ENCODE measurements at regions of chr15 and their contacts with region 1.

Region 1: DNA sequence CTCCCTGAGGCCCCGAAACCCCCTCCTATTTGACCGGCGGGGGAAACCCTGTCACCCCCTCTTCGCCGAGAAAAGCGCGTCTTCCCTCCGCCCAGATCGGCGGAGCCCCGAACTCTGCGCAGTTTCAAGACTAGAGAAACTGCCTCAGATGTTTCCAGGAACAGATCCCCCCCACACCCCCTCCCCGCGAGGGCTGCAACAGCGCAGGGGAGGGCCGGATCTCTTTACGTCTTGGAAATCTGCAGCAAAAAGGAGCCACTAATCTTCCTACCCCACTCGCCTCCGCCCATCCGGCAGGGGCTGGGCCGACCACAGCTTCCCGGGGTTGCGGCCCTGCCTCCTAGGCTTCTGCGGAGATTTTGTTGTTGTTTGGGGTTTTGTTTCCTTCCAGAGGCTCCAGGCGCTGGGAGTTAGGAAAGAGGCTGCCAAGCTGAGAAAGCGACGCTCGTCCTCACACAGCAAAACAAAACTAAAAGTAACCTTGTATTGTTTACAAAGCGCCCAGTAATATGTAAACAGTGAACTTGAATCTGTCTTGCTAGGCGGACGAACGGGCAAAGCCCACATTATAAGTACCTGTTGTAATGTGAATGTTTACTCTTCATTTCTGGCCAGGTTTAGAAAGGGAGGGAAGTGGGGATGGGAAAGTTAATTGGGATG is 2.2 kb downstream of the FOXB1 start:
- DNase-seq: peak; percentile 82
- H3K4me3 Mint-ChIP-seq: peak overlapping the region; percentile 92
- H3K27ac Mint-ChIP-seq: peak overlapping the region; percentile 93
- H3K4me1 Mint-ChIP-seq: peaks cover 63% of the 10 kb centered on the region
- H3K27me3 Mint-ChIP-seq: peaks cover 73% of the 10 kb centered on the region

Region 2: GRCh38 chr15:60017538-60018520 is 11.5 kb after region 1 on chr15:
- intact Hi-C with region 1: loop called (anchors 1 kb)
- DNase-seq: no peak
- H3K4me3 Mint-ChIP-seq: peak overlapping the region; percentile 4
- H3K27ac Mint-ChIP-seq: peak overlapping the region; percentile 30
- H3K4me1 Mint-ChIP-seq: peaks cover 19% of the 10 kb centered on the region
- H3K27me3 Mint-ChIP-seq: peaks cover 14% of the 10 kb centered on the region

Region 3: GRCh38 chr15:60044636-60045270 is 38.4 kb after region 1 on chr15:
- intact Hi-C with region 1: loop called (anchors 1 kb)
- DNase-seq: peak; percentile 39
- H3K4me3 Mint-ChIP-seq: peak overlapping the region; percentile 6
- H3K27ac Mint-ChIP-seq: peak overlapping the region; percentile 54
- H3K4me1 Mint-ChIP-seq: peaks cover 24% of the 10 kb centered on the region
- H3K27me3 Mint-ChIP-seq: no peaks in the 10 kb centered on the region

Region 4: GRCh38 chr15:60077581-60078359 is 71.4 kb after region 1 on chr15:
- intact Hi-C with region 1: loop called (anchors 1 kb)
- DNase-seq: peak; percentile 3
- H3K4me3 Mint-ChIP-seq: peak overlapping the region; percentile 4
- H3K27ac Mint-ChIP-seq: peak overlapping the region; percentile 75
- H3K4me1 Mint-ChIP-seq: peaks cover 49% of the 10 kb centered on the region
- H3K27me3 Mint-ChIP-seq: peaks cover 2% of the 10 kb centered on the region

Region 5: DNA sequence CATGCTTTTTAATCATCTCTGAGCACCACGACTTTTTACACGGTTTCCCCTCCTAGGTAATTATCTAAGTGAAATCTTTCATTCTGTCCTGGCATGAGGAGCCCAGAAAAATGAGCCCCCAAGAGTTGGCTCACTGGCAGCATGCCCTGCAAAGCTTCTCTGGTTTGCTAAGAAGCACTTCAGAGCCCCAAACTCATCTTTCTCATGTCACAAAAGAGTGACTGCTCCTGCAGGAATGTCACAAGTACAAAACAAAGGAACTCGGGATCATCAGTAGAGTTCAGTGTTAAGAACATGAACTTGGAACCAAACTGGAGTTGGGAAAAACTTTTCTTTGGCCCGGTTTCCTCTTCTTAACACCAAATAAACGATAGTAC is 121.7 kb after region 1 on chr15:
- intact Hi-C with region 1: loop called (anchors 1 kb)
- DNase-seq: no peak
- H3K4me3 Mint-ChIP-seq: peak overlapping the region; percentile 82
- H3K27ac Mint-ChIP-seq: peak overlapping the region; percentile 80
- H3K4me1 Mint-ChIP-seq: peaks cover 57% of the 10 kb centered on the region
- H3K27me3 Mint-ChIP-seq: peaks cover 11% of the 10 kb centered on the region

Region 6: GRCh38 chr15:60179786-60180391 is 173.6 kb after region 1 on chr15:
- intact Hi-C with region 1: loop called (anchors 1 kb)
- DNase-seq: no peak
- H3K4me3 Mint-ChIP-seq: no peak overlapping the region
- H3K27ac Mint-ChIP-seq: no peak overlapping the region
- H3K4me1 Mint-ChIP-seq: no peaks in the 10 kb centered on the region
- H3K27me3 Mint-ChIP-seq: peaks cover 30% of the 10 kb centered on the region

Region 7: DNA sequence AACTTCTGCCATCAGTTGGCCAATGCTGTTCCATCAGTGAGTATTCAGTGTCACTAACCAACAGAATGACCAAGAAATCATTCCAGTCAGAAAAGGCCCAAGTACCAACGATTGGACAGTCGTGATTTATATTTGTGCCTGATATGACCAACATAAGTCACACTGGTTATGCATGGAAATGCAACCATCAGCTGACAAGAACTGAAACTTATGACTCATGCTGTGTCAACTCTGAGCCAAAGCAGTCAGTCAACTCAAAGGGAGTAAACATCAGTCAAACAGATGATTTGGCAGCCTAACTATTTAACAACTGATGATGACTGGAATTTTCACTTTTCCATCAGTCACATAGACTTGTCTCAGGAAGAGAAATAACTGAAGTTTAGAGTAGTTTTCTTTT is 249.1 kb after region 1 on chr15:
- intact Hi-C with region 1: no loop called
- DNase-seq: peak; percentile 26
- H3K4me3 Mint-ChIP-seq: no peak overlapping the region
- H3K27ac Mint-ChIP-seq: peak overlapping the region; percentile 7
- H3K4me1 Mint-ChIP-seq: peaks cover 9% of the 10 kb centered on the region
- H3K27me3 Mint-ChIP-seq: peaks cover 45% of the 10 kb centered on the region